A673 (cell line): ENCODE measurements at regions of chr4 and their contacts with region 1.

Region 1: DNA sequence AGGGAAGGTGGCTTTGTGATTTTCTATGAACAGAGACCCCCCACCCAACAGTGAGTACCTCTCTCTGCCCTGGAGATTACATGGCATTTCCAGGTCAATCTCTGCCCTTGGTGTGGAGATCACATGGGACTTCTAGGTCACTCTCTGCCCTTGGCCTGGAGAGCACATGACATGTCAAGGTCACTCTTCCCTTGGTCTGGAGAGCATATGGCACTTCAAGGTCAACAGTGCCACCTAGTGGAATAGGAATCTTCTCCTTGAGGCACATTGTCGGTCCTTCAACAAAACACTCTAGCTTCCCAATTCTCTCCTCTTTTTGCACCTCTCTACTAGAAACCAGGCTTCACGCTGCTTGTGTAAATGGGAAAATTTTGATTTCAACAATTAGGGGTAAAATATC is 66.2 kb upstream of the TACR3 start:
- DNase-seq: peak; percentile 71
- H3K4me3 ChIP-seq: no peak overlapping the region
- H3K27ac ChIP-seq: no peak overlapping the region
- H3K4me1 ChIP-seq: no peaks in the 10 kb centered on the region
- H3K27me3 ChIP-seq: no peaks in the 10 kb centered on the region
- CTCF ChIP-seq: peak; percentile 63

Region 2: DNA sequence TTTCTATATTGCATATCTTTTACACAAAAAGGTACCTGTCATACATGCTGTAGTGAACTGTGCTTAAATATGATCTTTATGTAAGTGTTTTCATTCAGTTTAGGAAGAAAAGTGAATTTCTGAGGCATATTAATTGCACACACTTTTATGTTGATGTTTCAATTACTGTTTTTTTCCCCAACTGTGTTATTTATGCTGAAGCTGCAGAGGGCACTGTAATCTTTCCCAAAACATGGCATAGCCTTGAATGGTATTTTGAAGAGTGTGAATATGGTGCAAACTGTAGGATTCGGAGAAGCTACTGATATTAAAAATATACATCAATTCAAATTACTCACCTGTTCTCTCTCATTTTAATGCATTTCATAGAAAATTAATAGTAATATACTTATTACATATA is 581.9 kb before region 1 on chr4:
- CTCF ChIA-PET with region 1: no interaction called
- POLR2A ChIA-PET with region 1: no interaction called
- intact Hi-C with region 1: loop called (anchors 2 kb)
- DNase-seq: peak; percentile 23
- H3K4me3 ChIP-seq: no peak overlapping the region
- H3K27ac ChIP-seq: no peak overlapping the region
- H3K4me1 ChIP-seq: no peaks in the 10 kb centered on the region
- H3K27me3 ChIP-seq: no peaks in the 10 kb centered on the region
- CTCF ChIP-seq: peak; percentile 60

Region 3: DNA sequence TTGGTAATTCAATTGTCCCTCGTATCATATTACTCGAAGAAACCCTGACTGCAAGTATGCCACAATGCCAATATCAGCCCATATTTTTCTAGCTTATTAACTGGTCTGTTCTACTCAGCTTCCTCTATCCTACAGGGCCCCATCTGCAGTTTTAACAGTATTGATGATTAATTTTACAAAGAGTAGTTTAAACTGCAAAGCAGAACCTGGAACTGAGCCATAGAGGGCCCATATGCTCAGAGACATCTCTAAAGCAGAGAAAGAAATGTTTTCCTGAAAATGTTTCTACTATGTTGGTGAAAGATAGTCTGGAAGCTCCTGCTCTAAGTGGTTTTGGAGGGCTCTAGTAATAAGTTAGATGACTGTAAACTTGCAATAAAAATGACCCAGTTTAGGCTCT is 328.4 kb before region 1 on chr4:
- CTCF ChIA-PET with region 1: no interaction called
- POLR2A ChIA-PET with region 1: no interaction called
- intact Hi-C with region 1: no loop called
- DNase-seq: no peak
- H3K4me3 ChIP-seq: no peak overlapping the region
- H3K27ac ChIP-seq: no peak overlapping the region
- H3K4me1 ChIP-seq: no peaks in the 10 kb centered on the region
- H3K27me3 ChIP-seq: no peaks in the 10 kb centered on the region
- CTCF ChIP-seq: no peak

Region 4: DNA sequence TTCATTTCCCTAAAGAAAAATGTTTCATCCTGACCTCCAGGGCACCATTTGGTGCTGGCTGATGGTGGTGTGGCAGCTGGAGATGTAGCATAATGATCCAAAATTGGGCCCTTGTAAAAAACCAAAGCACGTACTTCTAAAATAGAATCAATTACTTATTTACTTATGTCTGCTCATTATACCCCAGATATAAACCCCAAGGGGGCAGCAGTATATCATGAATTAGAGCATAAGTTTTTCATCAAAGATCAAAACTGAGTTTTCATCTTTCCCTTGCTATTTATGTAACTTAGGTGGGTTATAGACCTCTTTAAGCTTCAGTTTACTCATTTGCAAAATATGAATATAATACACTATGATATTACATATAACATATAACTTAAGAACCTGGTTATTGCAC is 307.3 kb before region 1 on chr4:
- CTCF ChIA-PET with region 1: no interaction called
- POLR2A ChIA-PET with region 1: no interaction called
- intact Hi-C with region 1: loop called (anchors 5 kb)
- DNase-seq: no peak
- H3K4me3 ChIP-seq: no peak overlapping the region
- H3K27ac ChIP-seq: no peak overlapping the region
- H3K4me1 ChIP-seq: no peaks in the 10 kb centered on the region
- H3K27me3 ChIP-seq: peaks cover 19% of the 10 kb centered on the region
- CTCF ChIP-seq: 0 out of 2 replicates have a peak, but pooled peaks have one; percentile 21

Region 5: DNA sequence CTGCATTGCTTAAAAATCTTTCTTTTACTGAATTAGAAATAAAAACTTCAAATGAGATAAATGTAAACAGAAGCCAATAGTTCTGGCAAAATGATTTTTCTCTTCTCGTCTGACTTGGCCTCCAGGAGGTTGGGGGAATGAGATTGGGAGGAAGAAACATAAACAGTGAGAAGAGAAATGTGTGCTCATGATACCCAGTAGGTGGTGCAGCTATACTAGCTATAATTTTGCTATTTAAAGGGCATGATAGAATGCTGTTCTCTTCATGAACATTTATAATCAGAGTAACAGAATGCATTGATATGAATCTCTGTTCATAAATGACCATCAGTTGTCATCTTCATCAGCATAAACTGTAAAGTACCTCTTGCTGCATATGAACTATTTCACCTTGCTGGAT is 151.8 kb before region 1 on chr4:
- CTCF ChIA-PET with region 1: no interaction called
- POLR2A ChIA-PET with region 1: no interaction called
- intact Hi-C with region 1: loop called (anchors 10 kb)
- DNase-seq: peak; percentile 2
- H3K4me3 ChIP-seq: no peak overlapping the region
- H3K27ac ChIP-seq: no peak overlapping the region
- H3K4me1 ChIP-seq: no peaks in the 10 kb centered on the region
- H3K27me3 ChIP-seq: no peaks in the 10 kb centered on the region
- CTCF ChIP-seq: peak; percentile 34